ENCODE measurements at regions of chr3 and their contacts with region 1.

Region 1: DNA sequence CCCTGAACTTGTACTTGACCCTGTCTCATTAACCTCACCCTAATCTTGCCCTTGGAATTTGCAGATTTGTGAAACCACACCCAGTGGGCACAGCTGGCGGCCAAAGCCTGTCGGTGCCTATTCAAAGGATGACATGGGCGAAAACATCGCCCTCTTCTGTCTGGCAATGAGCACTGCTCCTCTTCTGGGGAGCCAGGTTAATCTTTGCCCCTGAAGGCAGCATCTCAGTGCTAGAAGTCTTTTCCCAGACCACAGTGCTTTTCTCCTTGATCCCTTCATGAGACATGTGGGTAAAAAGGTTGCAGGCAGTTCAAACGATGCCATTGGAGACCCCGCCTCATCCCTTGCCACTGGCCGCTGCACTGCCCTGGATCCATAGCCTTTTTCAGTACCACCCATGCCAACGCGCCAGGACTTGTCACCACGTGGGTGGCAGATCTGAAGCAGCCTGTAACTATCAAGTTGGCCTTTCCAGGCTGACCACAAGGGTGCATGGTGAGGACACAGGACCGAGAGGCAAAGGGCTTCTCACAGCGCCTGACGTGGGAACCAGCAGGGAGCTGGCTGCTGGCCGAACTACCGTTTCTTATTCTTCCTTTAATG is 6.5 kb upstream of the DNASE1L3 start:
- DNase-seq: peak; percentile 75 to 79
- H3K4me3 ChIP-seq: 0 out of 2 replicates have a peak overlapping the region, but pooled peaks have one; percentile 24
- H3K27ac ChIP-seq: 0 out of 2 replicates have a peak overlapping the region, but pooled peaks have one; percentile 33
- H3K4me1 ChIP-seq: peaks cover 48% of the 10 kb centered on the region
- H3K27me3 ChIP-seq: no peaks in the 10 kb centered on the region
- CTCF ChIP-seq: peak; percentile 84

Region 2: DNA sequence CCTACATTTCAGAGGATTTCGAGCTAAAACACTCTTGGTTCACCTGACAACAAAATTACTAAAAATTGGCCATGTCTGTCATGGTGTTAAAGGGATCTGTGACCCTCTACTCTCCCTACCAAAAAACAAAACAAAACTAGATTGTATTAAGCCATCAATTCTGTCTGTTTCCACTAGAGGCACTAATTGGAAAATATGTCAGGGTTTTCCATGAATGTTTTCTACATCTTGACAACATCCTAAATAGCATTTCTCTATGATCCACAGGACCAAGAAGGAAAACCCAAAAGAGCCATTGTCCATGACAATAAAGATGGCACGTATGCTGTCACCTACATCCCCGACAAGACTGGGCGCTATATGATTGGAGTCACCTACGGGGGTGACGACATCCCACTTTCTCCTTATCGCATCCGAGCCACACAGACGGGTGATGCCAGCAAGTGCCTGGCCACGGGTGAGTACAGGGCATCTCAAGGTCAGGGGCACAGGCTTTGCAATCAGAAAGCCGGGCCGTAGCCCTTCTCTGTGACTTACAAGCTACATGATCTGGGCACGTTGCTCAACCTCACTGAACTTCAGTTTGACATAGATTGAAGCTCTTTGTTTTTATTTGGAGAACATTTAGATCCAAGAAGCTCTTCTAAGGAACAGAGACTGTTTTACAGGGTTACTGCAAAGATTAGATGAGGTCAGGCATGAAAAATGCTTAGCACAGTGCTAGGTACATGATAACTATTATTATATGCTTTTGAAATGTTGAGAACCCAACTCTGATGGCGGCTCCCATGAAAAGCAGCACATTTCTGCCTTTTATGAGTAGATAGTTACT is 81.4 kb before region 1 on chr3:
- CTCF ChIA-PET with region 1: no interaction called
- POLR2A ChIA-PET with region 1: no interaction called
- intact Hi-C with region 1: no loop called
- DNase-seq: no peak
- H3K4me3 ChIP-seq: no peak overlapping the region
- H3K27ac ChIP-seq: no peak overlapping the region
- H3K4me1 ChIP-seq: no peaks in the 10 kb centered on the region
- H3K27me3 ChIP-seq: no peaks in the 10 kb centered on the region
- CTCF ChIP-seq: peak; percentile 52; the same call in 1 of the 2 replicates

Region 3: DNA sequence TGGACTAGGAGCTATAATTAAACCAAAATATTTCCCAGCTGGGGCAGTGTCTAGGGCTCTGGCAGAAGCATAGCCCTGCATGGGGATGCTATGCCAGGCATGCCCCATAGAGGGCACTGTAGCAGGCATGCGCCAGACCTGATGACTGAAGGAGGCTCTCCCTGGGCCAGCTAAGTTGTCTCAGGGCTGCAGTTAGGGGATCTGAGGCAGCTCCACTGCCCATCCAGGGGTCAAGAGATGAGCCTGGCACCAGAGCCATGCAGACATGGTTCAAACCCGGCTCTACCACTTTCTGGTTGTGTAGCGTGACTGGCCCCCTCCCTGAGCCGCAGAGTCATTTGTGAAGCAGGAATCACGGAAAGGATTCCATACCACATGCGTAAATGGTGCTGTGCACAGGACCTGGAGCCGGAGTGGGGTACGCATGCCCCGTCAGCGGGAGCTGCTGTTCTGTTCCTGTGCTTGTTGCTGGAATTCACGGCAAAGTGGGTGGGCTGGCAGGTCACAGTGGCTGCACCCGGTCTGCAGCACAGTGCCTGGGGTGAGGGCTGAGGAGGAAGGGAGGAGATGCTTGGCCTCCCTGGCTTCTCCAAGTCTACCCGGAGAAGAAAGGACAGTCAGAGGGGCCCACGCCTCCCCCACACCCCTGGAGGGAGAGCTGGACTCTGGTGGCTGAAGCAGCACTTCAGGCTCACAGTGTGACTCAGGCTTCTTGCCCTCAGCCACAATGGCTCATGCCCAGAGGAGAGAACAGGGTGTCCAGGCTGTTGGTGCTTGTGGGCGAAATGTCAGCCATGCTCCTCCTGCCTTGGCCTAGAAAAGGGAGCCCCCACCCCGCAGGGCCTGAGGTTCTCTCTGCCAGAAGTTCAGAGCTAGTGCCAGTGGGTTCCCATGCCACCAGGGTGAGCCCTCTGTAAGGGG is 49.6 kb before region 1 on chr3:
- CTCF ChIA-PET with region 1: no interaction called
- POLR2A ChIA-PET with region 1: no interaction called
- intact Hi-C with region 1: no loop called
- DNase-seq: peak in 1 of 2 experiments; percentile 51
- H3K4me3 ChIP-seq: no peak overlapping the region
- H3K27ac ChIP-seq: no peak overlapping the region
- H3K4me1 ChIP-seq: no peaks in the 10 kb centered on the region
- H3K27me3 ChIP-seq: no peaks in the 10 kb centered on the region
- CTCF ChIP-seq: peak; percentile 86

Region 4: GRCh38 chr3:58206406-58207011 is 10.8 kb before region 1 on chr3:
- CTCF ChIA-PET with region 1: no interaction called
- POLR2A ChIA-PET with region 1: no interaction called
- intact Hi-C with region 1: loop called (anchors 1 kb)
- DNase-seq: peak; percentile 49 to 91
- H3K4me3 ChIP-seq: no peak overlapping the region
- H3K27ac ChIP-seq: peak overlapping the region; percentile 74
- H3K4me1 ChIP-seq: peaks cover 17% of the 10 kb centered on the region
- H3K27me3 ChIP-seq: no peaks in the 10 kb centered on the region
- CTCF ChIP-seq: no peak

Region 5: DNA sequence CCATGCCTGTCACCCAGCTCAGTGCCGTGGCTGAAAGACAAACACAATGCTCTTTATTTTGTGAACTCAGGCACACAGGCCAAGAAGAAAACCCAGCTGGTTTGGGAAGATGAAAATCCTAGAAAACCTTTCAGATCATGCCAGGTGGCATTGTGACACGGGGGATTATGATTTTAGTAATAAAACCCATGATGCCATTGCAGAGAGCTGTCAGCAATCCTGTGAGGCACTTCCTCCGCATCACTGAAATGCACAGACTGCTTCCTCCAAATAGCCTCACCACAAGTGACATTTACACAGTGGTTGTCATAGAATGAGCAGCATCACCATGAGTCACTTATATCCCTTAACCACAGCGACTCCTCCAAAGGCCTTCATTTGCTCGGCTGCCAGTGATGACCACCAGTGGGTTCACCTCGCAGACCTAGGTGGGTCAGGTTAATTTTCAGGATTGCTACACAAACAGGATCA is 43.0 kb after region 1 on chr3:
- CTCF ChIA-PET with region 1: no interaction called
- POLR2A ChIA-PET with region 1: no interaction called
- intact Hi-C with region 1: loop called (anchors 1 kb)
- DNase-seq: peak; percentile 27 to 79
- H3K4me3 ChIP-seq: no peak overlapping the region
- H3K27ac ChIP-seq: peak overlapping the region; percentile 11; the same call in 1 of the 2 replicates
- H3K4me1 ChIP-seq: peaks cover 13% of the 10 kb centered on the region
- H3K27me3 ChIP-seq: no peaks in the 10 kb centered on the region
- CTCF ChIP-seq: no peak

Region 6: GRCh38 chr3:58299839-58300516 is 82.7 kb after region 1 on chr3:
- CTCF ChIA-PET with region 1: interaction called, 7 read pairs
- POLR2A ChIA-PET with region 1: interaction called, 8 read pairs
- intact Hi-C with region 1: loop called (anchors 1 kb)
- DNase-seq: peak in 1 of 2 experiments; percentile 39
- H3K4me3 ChIP-seq: no peak overlapping the region
- H3K27ac ChIP-seq: no peak overlapping the region
- H3K4me1 ChIP-seq: no peaks in the 10 kb centered on the region
- H3K27me3 ChIP-seq: no peaks in the 10 kb centered on the region
- CTCF ChIP-seq: peak; percentile 76

Region 7: DNA sequence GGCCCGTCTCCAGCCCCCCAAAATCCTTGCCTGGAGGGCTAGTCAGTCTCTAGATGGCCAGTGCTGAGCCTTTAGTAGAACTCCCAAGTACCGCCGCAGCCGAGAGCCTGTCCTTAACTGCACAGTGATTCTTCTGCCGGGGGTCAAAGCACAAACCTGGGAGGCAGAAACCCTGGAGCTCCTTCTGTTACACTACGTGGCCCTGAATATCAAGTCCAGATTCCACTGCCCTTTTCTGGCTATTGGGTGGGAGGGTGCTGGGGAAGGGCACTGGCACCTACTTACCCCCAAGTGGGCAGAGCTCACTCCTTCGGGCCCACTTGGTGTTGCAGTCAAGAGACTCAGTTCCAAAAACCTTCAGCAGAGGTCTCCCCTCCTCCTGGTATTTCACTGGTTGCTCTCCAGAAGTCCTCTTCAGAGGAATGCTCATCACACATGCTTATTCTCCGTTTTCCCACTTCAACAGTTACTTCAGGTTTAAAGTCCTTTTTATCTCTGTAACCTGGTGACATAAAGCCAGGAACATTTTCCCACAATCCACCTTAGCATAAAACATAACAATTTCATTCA is 205.5 kb after region 1 on chr3:
- CTCF ChIA-PET with region 1: interaction called, 11 read pairs
- POLR2A ChIA-PET with region 1: no interaction called
- intact Hi-C with region 1: no loop called
- DNase-seq: no peak
- H3K4me3 ChIP-seq: no peak overlapping the region
- H3K27ac ChIP-seq: no peak overlapping the region
- H3K4me1 ChIP-seq: no peaks in the 10 kb centered on the region
- H3K27me3 ChIP-seq: no peaks in the 10 kb centered on the region
- CTCF ChIP-seq: peak; percentile 38; the same call in 1 of the 2 replicates

Region 8: GRCh38 chr3:58491506-58492402 is 274.4 kb after region 1 on chr3 and contains the start of gene KCTD6:
- CTCF ChIA-PET with region 1: interaction called, 20 read pairs
- POLR2A ChIA-PET with region 1: no interaction called
- intact Hi-C with region 1: no loop called
- DNase-seq: peak; percentile 82 to 96
- H3K4me3 ChIP-seq: peak within 1 kb of the TSS; percentile 96
- H3K27ac ChIP-seq: peak within 1 kb of the TSS; percentile 1; the same call in 1 of the 2 replicates
- H3K4me1 ChIP-seq: peaks cover 58% of the 10 kb centered on the region
- H3K27me3 ChIP-seq: no peaks in the 10 kb centered on the region
- CTCF ChIP-seq: peak; percentile 56
- total RNA-seq, gene KCTD6: 7.8 and 10.3 TPM in 2 replicates